BJ (cell line): ENCODE measurements at regions of chr2 and their contacts with region 1.

Region 1: DNA sequence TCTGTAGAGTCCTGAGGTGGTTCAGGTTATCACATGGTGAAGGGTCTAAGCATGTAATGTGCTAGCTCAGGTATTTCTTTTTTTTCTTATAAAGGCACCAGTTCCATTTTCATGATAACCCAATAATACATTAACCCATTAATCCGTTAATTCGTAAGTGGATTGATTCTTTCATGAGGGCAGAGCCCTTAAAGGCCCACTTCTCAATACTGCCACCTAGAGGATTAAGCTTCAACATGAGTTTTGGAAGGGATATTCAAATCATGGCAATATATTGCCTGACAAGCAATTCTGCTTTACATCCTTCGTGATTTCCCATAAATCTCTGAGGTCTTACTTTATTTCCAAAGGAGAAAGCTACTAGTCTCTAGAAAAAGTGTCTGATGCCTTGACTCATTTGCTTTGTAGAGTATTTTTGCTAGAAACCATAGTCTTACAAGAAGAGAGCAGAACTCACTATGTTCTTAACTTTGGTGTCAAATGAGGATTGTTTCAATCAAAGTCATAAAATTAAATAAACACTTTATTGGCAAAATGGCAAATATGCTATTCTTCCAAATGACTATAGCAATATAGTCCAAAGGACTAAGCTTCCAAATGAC is 271.3 kb downstream of the KCNS3 start:
- DNase-seq: no peak
- H3K4me3 ChIP-seq: no peak overlapping the region
- H3K27me3 ChIP-seq: no peaks in the 10 kb centered on the region; the same call in 1 of the 2 replicates
- CTCF ChIP-seq: peak; percentile 80

Region 2: GRCh38 chr2:17851731-17852585 is 297.8 kb before region 1 on chr2:
- CTCF ChIA-PET with region 1: interaction called, 20 read pairs
- POLR2A ChIA-PET with region 1: no interaction called
- DNase-seq: peak; percentile 11
- H3K4me3 ChIP-seq: no peak overlapping the region
- H3K27me3 ChIP-seq: no peaks in the 10 kb centered on the region
- CTCF ChIP-seq: peak; percentile 93

Region 3: DNA sequence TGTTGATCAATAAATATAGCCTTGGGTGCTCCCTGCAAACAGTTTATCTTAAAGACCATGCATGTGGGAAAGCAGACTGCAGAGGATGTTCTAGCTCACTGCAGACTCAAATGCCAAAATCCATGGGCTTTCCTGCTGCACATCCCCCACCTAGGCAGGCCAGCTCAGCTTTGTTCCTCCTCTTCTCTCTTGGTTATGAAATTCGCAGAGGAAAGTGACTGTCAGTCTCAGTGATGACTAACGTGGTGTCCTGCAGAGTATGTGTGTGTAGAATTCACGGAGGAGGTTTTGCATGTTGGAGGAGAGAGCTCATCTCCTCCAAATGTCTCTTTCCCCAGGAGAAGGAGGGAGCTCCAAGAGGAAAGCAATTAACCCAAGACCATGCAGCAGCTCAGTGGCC is 292.7 kb before region 1 on chr2:
- CTCF ChIA-PET with region 1: interaction called, 20 read pairs
- POLR2A ChIA-PET with region 1: no interaction called
- DNase-seq: no peak
- H3K4me3 ChIP-seq: no peak overlapping the region
- H3K27me3 ChIP-seq: no peaks in the 10 kb centered on the region; the same call in 1 of the 2 replicates
- CTCF ChIP-seq: no peak

Region 4: DNA sequence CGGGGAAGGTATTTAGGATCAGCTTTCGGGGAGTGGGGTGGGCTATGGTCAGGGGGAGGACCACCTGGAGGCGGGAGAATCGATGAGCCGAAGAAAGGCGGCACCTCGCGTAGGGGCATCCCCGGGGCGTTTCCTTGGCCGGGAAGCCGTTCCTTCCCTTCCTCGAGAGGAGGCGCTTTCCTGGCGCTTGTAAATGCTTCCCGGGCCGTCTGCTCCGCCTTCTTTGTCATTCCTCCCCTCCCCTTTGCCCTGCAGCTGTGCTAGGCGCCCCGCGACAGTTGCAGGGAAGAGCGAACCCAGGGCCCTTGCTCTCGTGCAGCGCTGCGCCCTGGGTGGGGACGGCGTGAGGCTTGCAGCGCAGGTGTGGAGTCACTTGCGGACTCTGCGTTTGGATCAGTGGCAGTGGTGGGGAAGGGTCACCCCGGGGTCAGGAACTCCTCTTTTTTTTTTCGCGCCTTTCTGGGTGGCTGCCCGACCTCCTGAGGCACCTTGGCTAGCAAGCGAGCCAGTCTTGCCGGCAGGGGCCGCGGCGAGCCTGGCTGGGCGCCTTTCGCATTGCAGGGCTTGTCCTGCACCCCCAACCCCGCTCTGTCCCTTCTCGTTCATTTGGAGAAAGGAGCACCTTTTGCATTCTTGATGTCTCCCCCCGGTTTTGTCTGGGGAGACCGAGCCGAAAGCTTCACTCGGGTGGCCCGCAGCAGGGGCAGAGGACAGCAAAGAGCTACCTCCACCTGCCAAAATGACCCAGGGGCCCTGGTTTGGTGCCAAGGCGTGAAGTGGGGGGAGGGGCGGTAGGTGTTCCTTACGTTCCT is 270.4 kb before region 1 on chr2:
- CTCF ChIA-PET with region 1: interaction called, 10 read pairs
- POLR2A ChIA-PET with region 1: no interaction called
- DNase-seq: no peak
- H3K4me3 ChIP-seq: peak overlapping the region; percentile 67
- H3K27me3 ChIP-seq: peaks cover 18% of the 10 kb centered on the region
- CTCF ChIP-seq: peak; percentile 43

Region 5: GRCh38 chr2:18132697-18133096 is 17.0 kb before region 1 on chr2:
- CTCF ChIA-PET with region 1: interaction called, 10 read pairs
- POLR2A ChIA-PET with region 1: no interaction called
- DNase-seq: no peak
- H3K4me3 ChIP-seq: no peak overlapping the region
- H3K27me3 ChIP-seq: peaks cover 3% of the 10 kb centered on the region; the same call in 1 of the 2 replicates
- CTCF ChIP-seq: no peak

Region 6: GRCh38 chr2:18159896-18160295 is 10.2 kb after region 1 on chr2:
- CTCF ChIA-PET with region 1: interaction called, 19 read pairs
- POLR2A ChIA-PET with region 1: no interaction called
- DNase-seq: no peak
- H3K4me3 ChIP-seq: no peak overlapping the region
- H3K27me3 ChIP-seq: peaks cover 1% of the 10 kb centered on the region
- CTCF ChIP-seq: no peak